ENCODE measurements at regions of chr5 and their contacts with region 1.

Region 1: DNA sequence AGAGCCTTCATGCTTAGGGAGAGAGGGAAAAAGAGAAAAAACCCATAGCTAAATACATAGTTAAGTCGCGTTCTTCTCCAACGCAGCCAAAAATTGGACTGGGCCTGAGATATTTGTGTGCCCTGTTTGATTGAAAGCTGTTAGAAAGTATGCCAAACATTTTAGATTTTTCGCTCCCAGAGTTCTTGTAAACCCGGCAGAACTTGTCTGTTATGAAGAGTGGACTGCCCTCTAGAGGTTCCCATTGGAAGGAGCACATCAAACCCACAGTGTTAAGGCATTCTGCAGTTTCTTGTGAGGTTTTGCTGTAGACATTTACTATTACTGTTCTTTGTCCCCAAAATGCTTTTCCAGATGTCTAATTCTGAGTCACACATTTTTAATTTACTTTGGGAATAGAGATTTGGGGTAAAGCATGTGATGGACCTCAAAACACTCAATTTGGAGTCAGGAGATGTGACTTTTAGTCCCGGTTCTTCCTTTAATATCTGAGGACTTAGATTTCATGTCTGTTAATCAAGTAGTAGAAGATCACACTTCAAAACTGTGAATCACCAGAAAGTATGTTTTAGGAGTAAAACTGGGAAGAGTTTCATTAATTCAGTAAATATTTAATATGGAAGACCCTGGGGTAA is 96.6 kb downstream of the PCSK1 start:
- DNase-seq: peak; percentile 67
- H3K4me3 Mint-ChIP-seq: no peak overlapping the region
- H3K27ac Mint-ChIP-seq: no peak overlapping the region
- H3K4me1 Mint-ChIP-seq: peaks cover 11% of the 10 kb centered on the region
- H3K27me3 Mint-ChIP-seq: peaks cover 19% of the 10 kb centered on the region

Region 2: DNA sequence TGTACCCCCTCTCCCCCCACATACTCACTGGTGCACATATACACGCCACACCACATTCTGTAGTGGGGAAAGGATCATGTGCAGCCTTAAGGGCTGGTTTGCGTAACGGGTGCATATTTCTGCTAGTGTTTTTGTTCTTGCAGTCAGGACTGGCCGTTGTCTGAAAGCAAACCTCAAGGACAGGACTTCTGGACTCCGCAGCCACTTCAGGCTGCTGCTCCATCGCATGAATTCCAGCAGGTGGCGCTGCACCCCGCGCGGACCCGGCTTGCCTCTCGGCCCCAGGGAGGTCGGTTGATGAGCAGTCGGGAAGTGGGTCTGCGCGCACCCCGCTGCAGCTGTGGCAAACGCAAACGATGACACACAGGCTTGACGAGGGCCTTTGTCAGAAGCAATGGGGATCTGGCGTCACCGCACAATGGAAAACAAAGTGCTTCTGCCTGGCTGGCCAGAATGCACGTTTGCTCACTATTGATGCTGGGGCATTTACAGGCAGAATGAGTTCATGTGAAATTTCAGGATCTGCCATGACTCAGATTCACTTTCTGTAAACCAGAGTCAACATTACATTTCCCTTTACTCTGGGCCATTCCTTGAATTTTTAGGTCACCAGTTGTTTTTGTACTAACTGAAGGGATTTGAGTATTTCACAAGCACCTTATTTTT is 477.7 kb before region 1 on chr5:
- CTCF ChIA-PET with region 1: interaction called, 63 read pairs
- POLR2A ChIA-PET with region 1: no interaction called
- intact Hi-C with region 1: loop called (anchors 1 kb)
- DNase-seq: peak; percentile 97
- H3K4me3 Mint-ChIP-seq: peak overlapping the region; percentile 40
- H3K27ac Mint-ChIP-seq: peak overlapping the region; percentile 68
- H3K4me1 Mint-ChIP-seq: peaks cover 55% of the 10 kb centered on the region
- H3K27me3 Mint-ChIP-seq: no peaks in the 10 kb centered on the region

Region 3: DNA sequence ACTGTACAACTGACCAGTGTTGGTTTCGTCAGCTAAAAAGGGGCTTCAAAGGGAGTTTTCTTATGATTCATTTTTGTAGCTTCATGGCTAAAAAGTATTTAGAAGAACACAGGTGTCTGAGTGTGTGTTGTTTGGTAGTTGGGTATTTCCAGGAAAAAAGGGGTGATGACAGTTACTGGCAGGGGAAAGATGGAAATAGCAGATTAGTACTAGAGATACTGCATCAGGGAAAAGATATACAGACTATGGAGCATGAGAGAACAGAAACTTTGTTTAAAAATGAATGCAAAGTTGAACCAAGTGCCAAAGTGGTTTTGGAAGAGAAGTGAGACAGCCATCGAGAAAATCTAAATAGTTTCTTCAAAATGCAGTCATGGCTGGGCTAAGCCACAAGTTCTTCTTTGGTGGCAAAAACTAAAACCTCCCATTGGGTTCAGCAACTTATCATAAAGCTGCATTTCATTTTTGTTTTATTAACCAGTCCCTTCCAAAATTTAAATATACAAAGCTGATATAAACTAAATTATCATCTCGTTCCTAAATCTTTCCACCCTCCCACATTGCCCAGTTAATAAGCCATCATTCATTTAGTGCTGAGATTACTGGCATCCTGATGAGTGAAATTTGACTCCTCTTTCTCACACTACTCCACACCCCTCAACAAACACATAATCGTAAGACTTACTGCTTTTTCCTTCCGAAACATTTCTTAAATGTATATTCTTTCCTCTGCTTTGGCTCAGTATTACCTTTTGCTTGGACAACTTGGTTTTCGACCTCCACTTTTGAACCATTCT is 408.3 kb before region 1 on chr5:
- CTCF ChIA-PET with region 1: interaction called, 10 read pairs
- POLR2A ChIA-PET with region 1: interaction called, 3 read pairs
- intact Hi-C with region 1: no loop called
- DNase-seq: no peak
- H3K4me3 Mint-ChIP-seq: no peak overlapping the region
- H3K27ac Mint-ChIP-seq: peak overlapping the region; percentile 84
- H3K4me1 Mint-ChIP-seq: peaks cover 46% of the 10 kb centered on the region
- H3K27me3 Mint-ChIP-seq: no peaks in the 10 kb centered on the region

Region 4: DNA sequence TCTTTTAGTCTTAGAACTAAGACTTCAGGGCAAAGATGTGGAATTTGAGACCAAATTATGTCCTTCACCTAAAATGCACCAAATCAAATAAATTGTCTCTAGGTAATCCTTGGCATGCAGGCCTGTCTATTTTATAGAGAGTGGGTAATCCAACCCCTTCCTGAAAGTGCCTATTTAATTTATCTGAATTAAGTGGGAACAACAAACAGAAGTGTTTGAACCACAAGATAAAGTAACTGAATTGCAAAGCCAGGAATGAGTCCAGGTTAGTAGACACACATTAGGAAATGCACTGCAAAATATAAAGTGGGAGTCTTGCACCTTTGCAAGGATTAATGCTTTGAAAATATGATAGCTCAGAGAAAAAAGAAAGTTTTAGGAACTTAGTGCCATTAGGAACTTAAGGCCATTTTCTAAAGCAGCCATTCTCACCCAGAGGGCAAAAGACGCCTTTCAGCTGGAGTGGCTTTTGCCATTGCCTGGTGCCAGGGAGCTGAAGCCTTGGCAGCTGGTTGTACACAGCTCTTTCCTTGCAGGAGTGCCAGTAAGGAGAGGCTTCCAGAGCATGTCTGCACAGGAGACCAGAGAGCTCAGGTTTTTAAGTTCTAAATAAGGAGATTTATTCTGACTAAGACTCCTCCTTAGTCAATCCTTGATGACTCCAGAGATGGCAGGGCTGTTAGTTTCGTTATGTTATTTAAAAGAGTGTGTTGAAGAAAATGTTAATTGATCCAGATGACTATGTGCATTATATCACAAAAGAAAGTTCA is 223.1 kb before region 1 on chr5:
- CTCF ChIA-PET with region 1: interaction called, 4 read pairs
- POLR2A ChIA-PET with region 1: no interaction called
- intact Hi-C with region 1: loop called (anchors 2 kb)
- DNase-seq: peak; percentile 13
- H3K4me3 Mint-ChIP-seq: no peak overlapping the region
- H3K27ac Mint-ChIP-seq: no peak overlapping the region
- H3K4me1 Mint-ChIP-seq: peaks cover 41% of the 10 kb centered on the region
- H3K27me3 Mint-ChIP-seq: peaks cover 4% of the 10 kb centered on the region

Region 5: GRCh38 chr5:96200641-96201040 is 135.8 kb before region 1 on chr5:
- CTCF ChIA-PET with region 1: no interaction called
- POLR2A ChIA-PET with region 1: no interaction called
- intact Hi-C with region 1: no loop called
- DNase-seq: no peak
- H3K4me3 Mint-ChIP-seq: no peak overlapping the region
- H3K27ac Mint-ChIP-seq: no peak overlapping the region
- H3K4me1 Mint-ChIP-seq: peaks cover 3% of the 10 kb centered on the region
- H3K27me3 Mint-ChIP-seq: peaks cover 5% of the 10 kb centered on the region

Region 6: GRCh38 chr5:96279801-96280542 is 56.5 kb before region 1 on chr5:
- CTCF ChIA-PET with region 1: interaction called, 6 read pairs
- POLR2A ChIA-PET with region 1: no interaction called
- intact Hi-C with region 1: loop called (anchors 2 kb)
- DNase-seq: peak; percentile 51
- H3K4me3 Mint-ChIP-seq: peak overlapping the region; percentile 7
- H3K27ac Mint-ChIP-seq: peak overlapping the region; percentile 31
- H3K4me1 Mint-ChIP-seq: peaks cover 26% of the 10 kb centered on the region
- H3K27me3 Mint-ChIP-seq: peaks cover 29% of the 10 kb centered on the region

Region 7: DNA sequence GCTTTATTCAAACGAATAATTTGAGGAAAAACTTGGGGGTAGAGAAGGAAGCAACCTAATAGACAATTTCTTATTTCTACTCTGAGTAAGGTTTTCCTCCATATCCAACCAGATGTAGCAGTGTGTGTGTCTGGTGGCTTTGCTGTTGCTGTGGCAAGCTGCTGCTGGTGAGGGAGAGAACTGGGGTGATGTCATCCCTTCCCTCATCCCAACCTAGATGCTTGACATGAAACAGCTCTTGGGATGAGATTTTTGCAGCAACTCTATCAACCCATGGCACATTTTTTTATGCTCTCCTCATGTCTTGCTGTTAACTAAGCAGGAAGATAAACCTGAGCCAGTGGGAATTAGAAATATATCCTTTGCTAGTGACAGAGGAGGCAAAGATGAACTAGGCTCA is 39.2 kb before region 1 on chr5:
- CTCF ChIA-PET with region 1: no interaction called
- POLR2A ChIA-PET with region 1: no interaction called
- intact Hi-C with region 1: no loop called
- DNase-seq: no peak
- H3K4me3 Mint-ChIP-seq: no peak overlapping the region
- H3K27ac Mint-ChIP-seq: no peak overlapping the region
- H3K4me1 Mint-ChIP-seq: no peaks in the 10 kb centered on the region
- H3K27me3 Mint-ChIP-seq: peaks cover 6% of the 10 kb centered on the region

Region 8: GRCh38 chr5:96601811-96602244 is 265.4 kb after region 1 on chr5:
- CTCF ChIA-PET with region 1: interaction called, 130 read pairs
- POLR2A ChIA-PET with region 1: no interaction called
- intact Hi-C with region 1: no loop called
- DNase-seq: peak; percentile 43
- H3K4me3 Mint-ChIP-seq: no peak overlapping the region
- H3K27ac Mint-ChIP-seq: no peak overlapping the region
- H3K4me1 Mint-ChIP-seq: peaks cover 13% of the 10 kb centered on the region
- H3K27me3 Mint-ChIP-seq: peaks cover 2% of the 10 kb centered on the region

Measured in activated CD4-positive, alpha-beta memory T cell treated with anti-CD3 and anti-CD28 coated beads for 36 hours (primary cell).